Right cardiac atrium (tissue), 5 donors: ENCODE measurements at regions of chr20 and their contacts with region 1.

Region 1: GRCh38 chr20:63739130-63740069 is at the start of gene SLC2A4RG:
- DNase-seq: peak; percentile 86 to 94 (median 93)
- ATAC-seq: peak; percentile 60 to 70
- H3K4me3 ChIP-seq: peak within 1 kb of the TSS; percentile 87
- H3K27ac ChIP-seq: peak within 1 kb of the TSS; percentile 83
- H3K4me1 ChIP-seq: peaks cover 5% of the 10 kb centered on the region
- H3K27me3 ChIP-seq: no peaks in the 10 kb centered on the region
- total RNA-seq, gene SLC2A4RG: 42.7 to 69.1 (median 50.1) TPM

Region 2: DNA sequence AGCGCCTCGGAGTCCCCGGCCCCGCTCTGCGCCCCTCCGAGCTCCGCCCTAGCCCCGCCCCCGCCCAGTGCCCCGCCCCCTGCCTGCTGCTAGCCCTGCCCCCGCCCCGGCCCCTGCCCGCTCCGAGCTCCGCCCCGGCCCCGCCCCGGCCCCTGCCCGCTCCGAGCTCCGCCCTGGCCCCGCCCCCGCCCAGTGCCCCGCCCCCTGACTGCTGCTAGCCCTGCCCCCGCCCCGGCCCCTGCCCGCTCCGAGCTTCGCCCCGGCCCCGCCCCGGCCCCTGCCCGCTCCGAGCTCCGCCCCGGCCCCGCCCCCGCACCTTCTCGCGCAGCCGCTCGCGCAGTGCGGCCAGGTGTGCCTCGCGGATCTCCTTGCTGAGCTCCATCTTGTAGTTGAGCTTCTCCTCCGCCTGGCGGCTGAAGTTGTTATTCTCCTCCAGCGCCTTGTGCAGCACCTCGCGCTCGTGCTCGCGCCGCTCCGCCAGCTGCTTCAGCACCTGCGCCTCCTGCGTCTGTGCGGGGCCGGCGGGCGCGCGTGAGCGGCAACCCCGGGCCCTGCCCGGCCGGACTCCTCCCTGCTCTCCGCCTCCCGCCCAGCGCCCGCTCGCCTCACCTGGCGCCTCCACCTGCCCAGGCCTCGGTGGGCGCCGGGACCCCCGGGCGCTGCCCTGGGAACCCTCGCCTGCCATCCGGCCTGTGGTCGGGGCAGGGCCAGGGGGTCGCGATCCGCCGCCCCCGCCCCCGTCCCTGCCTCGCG is 97.4 kb before region 1 on chr20:
- intact Hi-C with region 1: loop called in 1 of 4 experiments (anchors 10 kb)
- DNase-seq: peak; percentile 84 to 97 (median 93)
- ATAC-seq: peak; percentile 88 to 90
- H3K4me3 ChIP-seq: peak overlapping the region; percentile 51
- H3K27ac ChIP-seq: peak overlapping the region; percentile 94
- H3K4me1 ChIP-seq: peaks cover 2% of the 10 kb centered on the region
- H3K27me3 ChIP-seq: no peaks in the 10 kb centered on the region

Region 3: GRCh38 chr20:64106981-64107735 is 367.8 kb after region 1 on chr20 and contains the start of gene NPBWR2:
- intact Hi-C with region 1: no loop called
- DNase-seq: peak; percentile 7 to 35 (median 20)
- ATAC-seq: no peak
- H3K4me3 ChIP-seq: no peak within 1 kb of the TSS
- H3K27ac ChIP-seq: no peak within 1 kb of the TSS
- H3K4me1 ChIP-seq: no peaks in the 10 kb centered on the region
- H3K27me3 ChIP-seq: no peaks in the 10 kb centered on the region
- total RNA-seq, gene NPBWR2: not detected